ENCODE measurements at regions of chr12 and their contacts with region 1.

Region 1: GRCh38 chr12:71626098-71626497 is 37.5 kb downstream of the ZFC3H1 start:
- DNase-seq: no peak
- ATAC-seq: no peak
- H3K4me3 ChIP-seq: no peak overlapping the region
- H3K4me3 Mint-ChIP-seq: peak overlapping the region in 8 of 10 donors; percentile 23 to 68 (median 42)
- H3K27ac ChIP-seq: peak overlapping the region; percentile 15
- H3K27ac Mint-ChIP-seq: peak overlapping the region; percentile 21 to 86 (median 70)
- H3K4me1 ChIP-seq: peaks cover 0 to 6% of the 10 kb centered on the region in 2 donors
- H3K4me1 Mint-ChIP-seq: peaks cover 14 to 40% (median 25%) of the 10 kb centered on the region in 7 donors
- H3K27me3 ChIP-seq: no peaks in the 10 kb centered on the region
- H3K27me3 Mint-ChIP-seq: no peaks in the 10 kb centered on the region

Region 2: DNA sequence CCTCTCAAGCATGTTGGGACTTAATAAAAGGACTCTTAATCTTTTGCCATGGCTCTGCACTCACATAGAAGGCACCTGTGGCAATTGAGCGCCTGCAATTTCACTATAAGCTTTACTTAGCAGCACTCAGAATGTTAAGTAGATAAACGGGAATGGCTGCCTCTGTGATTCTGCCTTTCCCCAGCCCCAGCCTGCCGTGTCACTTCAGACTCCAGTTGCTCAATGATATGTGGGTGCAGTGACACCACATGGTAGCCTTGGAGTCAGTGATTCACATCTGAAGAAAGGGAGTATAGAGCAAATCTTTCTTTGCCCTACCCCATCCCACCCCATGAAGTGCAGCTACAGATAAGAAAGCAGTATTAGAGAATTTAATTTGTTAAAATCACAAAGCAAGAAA is 58.6 kb before region 1 on chr12:
- CTCF ChIA-PET with region 1: no interaction called
- POLR2A ChIA-PET with region 1: no interaction called
- intact Hi-C with region 1: no loop called
- DNase-seq: no peak
- ATAC-seq: no peak
- H3K4me3 ChIP-seq: no peak overlapping the region
- H3K4me3 Mint-ChIP-seq: peak overlapping the region in 1 of 10 donors; percentile 3
- H3K27ac ChIP-seq: no peak overlapping the region
- H3K27ac Mint-ChIP-seq: no peak overlapping the region
- H3K4me1 ChIP-seq: no peaks in the 10 kb centered on the region
- H3K4me1 Mint-ChIP-seq: no peaks in the 10 kb centered on the region
- H3K27me3 ChIP-seq: no peaks in the 10 kb centered on the region
- H3K27me3 Mint-ChIP-seq: peaks cover 12 to 18% (median 13%) of the 10 kb centered on the region in 5 donors

Region 3: DNA sequence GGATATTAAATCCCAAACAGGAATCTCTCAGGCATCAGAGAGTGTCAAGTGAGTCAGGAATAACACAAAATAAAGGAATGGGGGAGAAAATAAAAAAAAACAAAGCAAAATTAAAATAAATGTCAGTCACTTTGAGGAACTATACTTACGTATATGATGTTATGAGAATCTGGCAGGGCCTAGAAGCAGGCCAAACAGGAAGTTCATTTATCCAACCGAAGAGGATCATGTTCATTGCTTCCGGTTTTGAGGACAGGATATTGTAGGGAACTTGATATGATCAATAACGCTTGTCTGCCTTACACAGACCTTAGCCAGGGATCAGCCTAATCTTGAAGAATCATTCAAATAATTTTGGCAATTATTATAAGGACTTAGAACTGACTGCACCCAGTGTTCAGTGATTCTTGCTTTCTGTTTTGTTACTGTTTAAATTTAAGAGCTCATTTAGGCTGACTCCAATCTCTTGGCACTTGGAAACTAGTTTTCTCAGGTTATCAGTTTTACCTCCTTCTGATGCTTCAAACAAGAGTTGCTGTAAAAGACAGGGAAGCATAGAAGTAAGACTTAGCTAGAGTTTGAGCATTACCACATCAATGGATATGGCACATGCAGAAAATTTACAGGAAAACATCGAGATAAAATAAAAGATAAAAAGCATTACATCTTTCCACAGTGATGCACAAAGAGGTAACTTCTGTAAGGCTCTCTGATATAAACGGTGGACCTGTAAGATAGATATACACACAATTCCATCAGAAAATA is 15.9 kb before region 1 on chr12:
- CTCF ChIA-PET with region 1: no interaction called
- POLR2A ChIA-PET with region 1: interaction called, 3 read pairs
- intact Hi-C with region 1: loop called (anchors 2 kb)
- DNase-seq: peak in 7 of 9 donors; percentile 8 to 43 (median 24)
- ATAC-seq: peak; percentile 70
- H3K4me3 ChIP-seq: no peak overlapping the region
- H3K4me3 Mint-ChIP-seq: peak overlapping the region in 9 of 10 donors; percentile 7 to 80 (median 62)
- H3K27ac ChIP-seq: peak overlapping the region; percentile 67
- H3K27ac Mint-ChIP-seq: peak overlapping the region; percentile 79 to 98 (median 91)
- H3K4me1 ChIP-seq: peaks cover 0 to 8% of the 10 kb centered on the region in 2 donors
- H3K4me1 Mint-ChIP-seq: peaks cover 7 to 48% (median 33%) of the 10 kb centered on the region in 7 donors
- H3K27me3 ChIP-seq: no peaks in the 10 kb centered on the region
- H3K27me3 Mint-ChIP-seq: no peaks in the 10 kb centered on the region

Region 4: GRCh38 chr12:71636704-71637115 is 10.6 kb after region 1 on chr12:
- CTCF ChIA-PET with region 1: interaction called, 6 read pairs
- POLR2A ChIA-PET with region 1: no interaction called
- intact Hi-C with region 1: loop called in 1 of 2 experiments (anchors 2 kb)
- DNase-seq: peak in 7 of 9 donors; percentile 27 to 65 (median 58)
- ATAC-seq: peak; percentile 84
- H3K4me3 ChIP-seq: no peak overlapping the region
- H3K4me3 Mint-ChIP-seq: no peak overlapping the region
- H3K27ac ChIP-seq: no peak overlapping the region
- H3K27ac Mint-ChIP-seq: peak overlapping the region in 8 of 9 donors; percentile 8 to 91 (median 59)
- H3K4me1 ChIP-seq: no peaks in the 10 kb centered on the region
- H3K4me1 Mint-ChIP-seq: peaks cover 0 to 18% (median 12%) of the 10 kb centered on the region in 7 donors
- H3K27me3 ChIP-seq: no peaks in the 10 kb centered on the region
- H3K27me3 Mint-ChIP-seq: no peaks in the 10 kb centered on the region

Measured in naive thymus-derived CD4-positive, alpha-beta T cell (primary cell).